ENCODE measurements at regions of chr17 and their contacts with region 1.

Region 1: DNA sequence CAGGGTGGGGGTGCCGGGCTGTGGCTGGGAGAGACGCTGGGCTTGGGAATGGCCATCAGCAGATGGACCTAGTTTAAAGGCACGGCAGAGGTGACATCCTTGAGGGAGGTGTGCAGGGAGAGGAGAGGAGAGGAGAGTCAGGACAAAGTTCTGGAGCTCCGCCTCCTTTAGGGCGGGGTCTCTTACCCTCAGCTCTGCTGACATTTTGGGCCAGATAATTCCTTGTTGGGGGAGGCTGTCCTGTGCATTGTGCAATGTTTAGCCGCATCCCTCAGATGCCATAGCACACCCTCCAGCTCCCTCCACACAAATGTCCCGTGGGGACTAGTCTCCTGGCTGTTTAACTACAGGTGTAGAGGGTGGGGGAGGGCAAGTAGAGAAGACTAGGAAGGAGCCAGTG is 48.3 kb downstream of the ARHGAP23 start:
- DNase-seq: no peak
- H3K4me3 ChIP-seq: no peak overlapping the region
- H3K27ac ChIP-seq: no peak overlapping the region
- H3K4me1 ChIP-seq: no peaks in the 10 kb centered on the region
- H3K27me3 ChIP-seq: no peaks in the 10 kb centered on the region
- CTCF ChIP-seq: no peak
- EP300 ChIP-seq: no peak
- POLR2A ChIP-seq: no peak

Region 2: DNA sequence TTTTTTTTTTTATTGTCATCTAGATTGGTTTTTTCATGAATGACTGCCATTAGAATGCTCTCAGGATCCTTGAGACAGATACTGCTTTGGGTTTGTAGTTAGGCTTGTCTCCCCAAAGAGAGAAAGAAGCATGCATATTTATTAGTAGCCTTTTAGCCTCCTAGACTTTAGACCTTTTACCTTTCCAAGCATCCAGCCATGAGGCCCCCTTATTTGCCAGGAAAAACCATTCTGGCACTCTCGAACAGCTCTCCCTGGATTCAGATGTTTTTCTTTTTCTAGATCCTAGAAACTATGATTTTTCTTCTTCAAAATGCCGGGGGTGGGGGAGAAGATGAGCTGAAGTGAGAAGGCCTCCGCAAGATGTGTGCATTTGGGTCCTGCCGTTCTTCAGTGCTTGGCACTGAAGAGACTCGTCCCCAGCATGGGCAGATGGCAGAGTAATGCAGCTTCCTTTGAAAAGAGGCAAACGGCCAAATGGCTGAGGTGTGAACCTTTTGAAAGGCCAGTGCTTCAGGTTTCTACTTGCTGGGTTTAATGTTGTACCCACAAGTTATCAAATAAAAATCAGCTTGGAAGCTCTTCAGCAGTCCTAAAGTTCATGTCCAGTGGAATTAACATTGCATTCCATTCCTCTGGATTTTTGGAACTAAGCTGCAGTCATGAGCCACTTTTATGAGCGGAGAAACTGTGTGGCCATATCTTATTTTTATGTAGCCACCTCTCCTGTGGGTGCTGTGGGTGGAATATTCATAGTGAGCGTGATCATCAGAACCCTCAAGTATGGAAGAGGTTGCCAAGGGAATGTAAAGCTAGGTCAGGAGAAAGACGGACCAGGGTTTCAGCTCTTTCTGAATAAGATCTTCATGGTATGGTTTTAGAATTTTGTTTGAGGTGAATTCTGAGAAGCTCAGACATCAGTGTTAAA is 117.7 kb before region 1 on chr17:
- intact Hi-C with region 1: no loop called
- DNase-seq: no peak
- H3K4me3 ChIP-seq: no peak overlapping the region
- H3K27ac ChIP-seq: no peak overlapping the region
- H3K4me1 ChIP-seq: peaks cover 8% of the 10 kb centered on the region
- H3K27me3 ChIP-seq: no peaks in the 10 kb centered on the region
- CTCF ChIP-seq: no peak
- EP300 ChIP-seq: no peak
- POLR2A ChIP-seq: no peak

Region 3: GRCh38 chr17:38444151-38444550 is 32.4 kb before region 1 on chr17:
- intact Hi-C with region 1: loop called in 1 of 4 experiments (anchors 5 kb)
- DNase-seq: peak; percentile 64 to 79 (median 76)
- H3K4me3 ChIP-seq: no peak overlapping the region
- H3K27ac ChIP-seq: no peak overlapping the region
- H3K4me1 ChIP-seq: no peaks in the 10 kb centered on the region
- H3K27me3 ChIP-seq: no peaks in the 10 kb centered on the region
- CTCF ChIP-seq: peak; percentile 52 to 94 (median 93)
- EP300 ChIP-seq: no peak
- POLR2A ChIP-seq: no peak